ENCODE measurements at regions of chr16 and their contacts with region 1.

Region 1: DNA sequence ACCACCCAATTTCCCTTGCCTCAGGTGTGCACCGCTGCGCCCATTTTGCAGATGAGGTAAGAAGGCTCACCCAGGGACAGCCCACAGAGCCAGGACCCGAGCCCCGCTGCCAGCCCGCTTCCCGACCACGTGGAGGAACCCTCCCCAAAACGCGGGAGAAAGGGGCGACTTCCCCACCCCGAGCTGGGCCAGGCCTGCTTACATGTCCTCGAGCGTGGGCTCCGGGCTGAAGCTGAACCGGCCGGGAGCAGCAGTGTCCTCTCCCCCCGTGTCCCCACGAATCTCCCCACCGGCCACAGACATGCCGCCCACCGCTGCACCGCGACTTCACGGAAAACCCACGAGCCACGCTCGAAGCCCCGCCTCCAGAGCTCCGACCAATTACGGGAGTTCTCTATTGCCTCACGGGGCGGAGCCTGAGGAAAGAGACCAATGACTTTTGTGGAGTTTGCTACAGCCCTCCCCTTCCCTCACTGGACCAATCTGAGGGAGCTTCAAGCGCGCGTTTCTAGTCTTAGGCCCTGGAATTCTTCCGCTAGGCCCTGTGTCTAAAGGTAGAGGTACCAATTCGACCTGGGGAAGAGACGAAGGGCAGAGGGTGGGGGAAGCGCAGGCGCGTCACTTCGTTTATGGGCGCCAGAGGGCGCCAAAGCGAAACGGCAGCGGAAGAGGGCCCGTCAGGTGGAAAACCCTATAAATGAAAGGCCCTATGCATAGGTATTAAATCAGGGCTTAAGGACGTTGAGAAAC is at the start of gene DCTPP1:
- DNase-seq: peak; percentile 98

Region 2: GRCh38 chr16:30407102-30407803 is 22.6 kb before region 1 on chr16 and contains the start of gene ZNF771:
- CTCF ChIA-PET with region 1: interaction called, 20 read pairs
- POLR2A ChIA-PET with region 1: interaction called, 10 read pairs
- DNase-seq: peak; percentile 94

Region 3: GRCh38 chr16:30526823-30527635 is 97.2 kb after region 1 on chr16:
- CTCF ChIA-PET with region 1: interaction called, 5 read pairs
- POLR2A ChIA-PET with region 1: interaction called, 20 read pairs
- DNase-seq: peak; percentile 99

Region 4: GRCh38 chr16:30609926-30610839 is 180.3 kb after region 1 on chr16 and contains the start of gene ZNF689:
- CTCF ChIA-PET with region 1: interaction called, 24 read pairs
- POLR2A ChIA-PET with region 1: interaction called, 16 read pairs
- DNase-seq: peak; percentile 100

Region 5: GRCh38 chr16:30628627-30629540 is 199.0 kb after region 1 on chr16:
- CTCF ChIA-PET with region 1: interaction called, 11 read pairs
- POLR2A ChIA-PET with region 1: interaction called, 7 read pairs
- DNase-seq: peak; percentile 90

Measured in HEK293T (cell line).